HepG2 (cell line): ENCODE measurements at regions of chr3 and their contacts with region 1.

Region 1: DNA sequence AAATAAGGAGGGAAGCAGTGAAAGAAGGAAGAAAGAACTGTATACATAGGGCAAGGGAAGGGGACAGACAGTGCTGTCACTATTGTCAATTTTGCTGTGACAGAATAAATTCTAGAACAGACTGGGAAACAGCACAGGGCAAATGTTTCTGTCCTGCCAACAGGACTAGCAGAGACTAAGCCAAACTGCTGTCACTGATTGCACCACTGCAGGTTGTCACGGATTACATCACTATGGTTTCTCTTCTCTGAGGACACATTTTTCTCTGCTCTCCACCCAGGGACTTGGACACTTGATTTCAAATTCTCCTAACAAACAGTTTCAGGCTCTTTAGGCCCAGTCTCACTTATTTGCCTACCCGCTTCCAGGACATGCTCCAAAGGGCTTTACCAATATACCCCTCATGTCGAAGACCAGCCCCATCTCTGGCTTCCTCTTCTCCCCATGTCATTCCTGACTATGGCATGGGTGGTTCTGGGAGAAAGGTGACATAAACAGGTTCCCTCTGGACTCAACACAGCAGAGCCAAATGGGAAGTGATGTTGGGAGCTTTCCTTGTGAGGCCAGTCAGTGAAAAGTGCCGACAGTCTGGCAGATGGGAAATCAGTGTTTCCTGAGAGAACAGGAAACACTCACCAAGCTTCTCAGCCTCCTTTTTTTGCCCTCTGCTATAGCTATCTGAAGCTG is 70.2 kb upstream of the ST3GAL6 start:
- DNase-seq: peak; percentile 12
- ATAC-seq: peak; percentile 90
- H3K4me3 ChIP-seq: peak overlapping the region in 1 of 3 experiments; percentile 2; a peak in 1 of 6 replicates
- H3K27ac ChIP-seq: no peak overlapping the region
- H3K4me1 ChIP-seq: peaks cover 21% of the 10 kb centered on the region
- H3K27me3 ChIP-seq: no peaks in the 10 kb centered on the region; a peak in 1 of 5 replicates
- CTCF ChIP-seq: no peak
- EP300 ChIP-seq: no peak
- POLR2A ChIP-seq: no peak
- RAD21 ChIP-seq: no peak

Region 2: DNA sequence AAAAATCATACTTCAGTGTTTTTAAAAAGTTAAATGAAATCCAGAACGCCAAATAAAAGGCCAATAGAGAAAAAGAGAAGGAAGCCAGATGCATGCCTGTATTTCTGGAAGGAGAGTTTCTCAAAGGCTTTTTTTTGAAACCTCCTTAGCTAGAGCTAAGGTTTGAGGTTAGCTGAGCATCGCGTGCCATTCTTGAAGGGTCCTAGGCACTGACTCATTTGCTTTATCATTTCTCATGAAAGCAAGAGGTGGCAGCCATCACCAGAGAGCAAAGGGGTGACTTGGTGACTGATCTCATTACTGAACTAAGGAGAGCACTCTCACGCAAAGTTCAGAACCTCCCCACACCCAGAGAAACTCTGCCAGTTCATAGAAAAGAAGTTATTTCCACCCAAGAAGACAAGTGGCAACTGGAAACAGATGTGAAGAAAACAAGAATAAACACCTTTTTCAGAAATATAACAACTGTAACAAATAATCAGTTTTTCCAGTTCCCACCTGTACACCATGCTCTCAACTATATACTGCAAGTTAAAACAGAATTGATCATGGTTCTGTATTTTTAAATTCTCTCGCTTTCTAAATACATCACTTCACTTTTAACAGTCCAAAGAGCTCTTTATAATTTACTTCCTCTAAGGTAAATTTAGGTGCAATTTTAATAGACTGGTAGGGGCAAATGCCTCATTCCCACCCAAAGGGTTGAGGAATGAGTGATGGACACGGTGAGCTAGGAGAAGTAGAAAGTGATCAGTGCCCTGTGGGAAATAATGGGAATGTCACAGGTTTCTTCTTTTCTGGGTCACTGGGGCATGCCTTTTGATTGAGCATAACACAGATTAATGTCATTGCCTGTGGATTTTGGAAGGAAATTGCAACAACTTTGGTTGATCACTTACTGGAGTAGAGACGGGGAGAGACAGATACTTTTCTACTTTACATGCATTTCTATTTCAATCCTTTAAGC is 136.5 kb before region 1 on chr3:
- CTCF ChIA-PET with region 1: no interaction called
- POLR2A ChIA-PET with region 1: no interaction called
- in situ Hi-C with region 1: no loop called
- intact Hi-C with region 1: no loop called
- DNase-seq: no peak
- ATAC-seq: no peak
- H3K4me3 ChIP-seq: no peak overlapping the region
- H3K27ac ChIP-seq: no peak overlapping the region
- H3K4me1 ChIP-seq: no peaks in the 10 kb centered on the region
- H3K27me3 ChIP-seq: no peaks in the 10 kb centered on the region
- CTCF ChIP-seq: no peak
- EP300 ChIP-seq: no peak
- POLR2A ChIP-seq: no peak
- RAD21 ChIP-seq: no peak

Region 3: DNA sequence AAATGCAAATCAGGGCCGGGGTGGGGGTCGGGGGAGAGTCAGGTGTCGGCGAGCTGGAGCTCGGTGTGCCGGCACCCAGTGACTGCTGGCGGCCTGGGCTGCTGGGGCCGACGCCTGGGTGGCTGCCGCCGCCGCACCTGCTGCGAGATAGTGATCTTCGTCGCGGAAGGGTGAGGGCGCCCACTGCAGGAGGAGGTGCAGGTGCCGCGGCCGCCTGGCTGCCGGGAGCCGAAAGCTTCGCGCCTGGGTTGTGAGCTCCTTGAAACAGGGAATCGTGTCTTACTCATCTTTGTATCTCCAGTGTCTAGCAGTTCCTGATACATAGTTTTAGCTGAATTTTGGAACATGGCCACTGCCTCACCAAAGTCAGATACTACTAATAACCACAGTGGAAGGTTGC is 35.5 kb before region 1 on chr3:
- CTCF ChIA-PET with region 1: no interaction called
- POLR2A ChIA-PET with region 1: no interaction called
- in situ Hi-C with region 1: no loop called
- intact Hi-C with region 1: no loop called
- DNase-seq: no peak
- ATAC-seq: peak; percentile 93
- H3K4me3 ChIP-seq: no peak overlapping the region
- H3K27ac ChIP-seq: no peak overlapping the region
- H3K4me1 ChIP-seq: no peaks in the 10 kb centered on the region
- H3K27me3 ChIP-seq: peaks cover 0 to 8% of the 10 kb centered on the region in 2 experiments; a peak in 2 of 5 replicates
- CTCF ChIP-seq: peak; percentile 75
- EP300 ChIP-seq: no peak
- POLR2A ChIP-seq: no peak
- RAD21 ChIP-seq: 0 out of 2 replicates have a peak, but pooled peaks have one; percentile 19

Region 4: DNA sequence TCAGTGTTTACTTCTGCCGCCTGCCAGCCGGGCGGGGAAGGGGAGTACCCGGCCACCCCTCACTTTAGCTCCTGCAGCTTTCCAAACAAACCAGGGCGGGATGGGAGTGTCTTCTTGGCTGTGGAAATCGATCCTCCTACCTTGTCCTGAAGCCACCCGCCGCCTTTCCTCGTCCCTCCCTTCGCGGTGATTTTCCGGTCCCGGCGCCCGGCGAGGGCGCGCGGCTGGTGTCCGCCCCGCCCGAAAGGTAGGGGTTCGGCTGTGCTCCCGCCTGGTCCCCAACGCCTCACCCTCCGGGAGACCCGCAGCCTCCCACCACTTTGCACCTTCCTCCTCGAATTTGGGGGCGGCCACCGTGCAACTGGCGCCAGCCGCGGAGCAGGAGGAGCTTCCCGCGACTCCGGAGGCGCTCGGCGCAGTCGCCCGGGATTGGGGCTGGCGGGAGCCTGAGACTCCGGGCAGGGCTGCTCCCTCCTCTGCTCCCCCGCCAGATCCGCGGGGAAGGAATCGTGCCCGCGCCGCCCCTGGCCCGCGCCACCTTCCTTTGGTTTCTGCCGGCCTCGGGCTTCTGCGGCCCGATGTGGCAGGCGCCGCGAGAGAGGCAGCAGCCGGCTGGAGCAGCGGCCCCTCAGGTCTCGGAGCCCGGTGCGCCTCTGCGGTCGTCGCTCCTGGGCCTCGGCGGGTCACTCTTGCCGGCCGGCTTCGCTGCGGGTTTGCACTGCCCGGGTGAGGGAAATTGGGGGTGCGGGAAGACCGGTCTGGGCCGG is 39.5 kb after region 1 on chr3:
- CTCF ChIA-PET with region 1: no interaction called
- POLR2A ChIA-PET with region 1: interaction called, 3 read pairs
- in situ Hi-C with region 1: no loop called
- intact Hi-C with region 1: loop called (anchors 5 kb)
- DNase-seq: peak; percentile 82
- ATAC-seq: peak; percentile 85
- H3K4me3 ChIP-seq: peak overlapping the region; percentile 87 to 94 (median 92)
- H3K27ac ChIP-seq: peak overlapping the region; percentile 94
- H3K4me1 ChIP-seq: peaks cover 53% of the 10 kb centered on the region
- H3K27me3 ChIP-seq: no peaks in the 10 kb centered on the region; a peak in 1 of 5 replicates
- CTCF ChIP-seq: 0 out of 2 replicates have a peak, but pooled peaks have one; percentile 16
- EP300 ChIP-seq: peak in 1 of 2 experiments; percentile 31; a peak in 1 of 4 replicates
- POLR2A ChIP-seq: peak; percentile 62 to 70; a peak in 3 of 4 replicates
- RAD21 ChIP-seq: no peak

Region 5: DNA sequence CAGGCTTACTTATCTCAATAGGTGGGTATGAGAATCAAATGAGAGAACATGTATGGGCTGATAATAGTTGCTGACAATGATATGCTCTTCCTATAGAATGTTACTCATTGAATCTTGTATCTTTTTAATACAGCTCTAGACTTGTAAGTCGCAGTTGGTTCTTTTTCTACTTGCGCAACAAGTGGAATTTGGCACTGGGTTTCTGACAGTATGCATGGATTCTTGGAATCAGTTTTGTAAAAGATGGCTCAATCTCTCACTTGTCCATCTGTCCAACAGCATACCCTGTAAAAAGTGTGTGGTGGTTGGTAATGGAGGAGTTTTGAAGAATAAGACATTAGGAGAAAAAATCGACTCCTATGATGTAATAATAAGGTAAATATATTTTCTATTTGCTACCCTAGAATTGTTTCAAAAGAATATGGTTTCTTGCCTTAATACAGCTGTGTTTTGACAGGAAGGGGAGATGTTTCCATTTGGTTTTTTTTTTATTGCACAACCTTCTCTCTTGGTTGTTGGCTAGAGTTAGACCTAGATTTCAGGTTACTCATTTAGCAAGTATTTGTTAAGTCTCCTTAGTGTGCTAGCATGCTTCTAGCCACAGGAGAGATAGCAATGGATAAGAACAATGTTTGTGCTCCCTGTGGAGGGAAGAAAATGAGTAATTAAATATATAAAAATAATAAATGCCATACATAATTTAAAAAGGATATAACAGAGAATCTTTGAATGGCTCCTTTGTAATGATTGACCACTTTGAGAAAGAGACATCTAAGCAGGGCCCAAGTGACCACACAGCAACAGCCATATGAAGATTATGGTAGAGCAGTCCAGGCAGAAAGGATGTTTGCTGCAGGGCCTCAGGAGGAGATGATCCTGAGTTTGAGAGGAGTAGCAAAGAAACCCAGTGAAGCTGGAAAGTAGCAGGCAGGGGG is 92.0 kb after region 1 on chr3:
- CTCF ChIA-PET with region 1: no interaction called
- POLR2A ChIA-PET with region 1: no interaction called
- in situ Hi-C with region 1: no loop called
- intact Hi-C with region 1: loop called (anchors 5 kb)
- DNase-seq: peak; percentile 44
- ATAC-seq: no peak
- H3K4me3 ChIP-seq: no peak overlapping the region; a peak in 1 of 6 replicates
- H3K27ac ChIP-seq: peak overlapping the region; percentile 70
- H3K4me1 ChIP-seq: peaks cover 83% of the 10 kb centered on the region
- H3K27me3 ChIP-seq: no peaks in the 10 kb centered on the region
- CTCF ChIP-seq: no peak
- EP300 ChIP-seq: peak in 1 of 2 experiments; percentile 19; a peak in 1 of 4 replicates
- POLR2A ChIP-seq: no peak
- RAD21 ChIP-seq: no peak

Region 6: DNA sequence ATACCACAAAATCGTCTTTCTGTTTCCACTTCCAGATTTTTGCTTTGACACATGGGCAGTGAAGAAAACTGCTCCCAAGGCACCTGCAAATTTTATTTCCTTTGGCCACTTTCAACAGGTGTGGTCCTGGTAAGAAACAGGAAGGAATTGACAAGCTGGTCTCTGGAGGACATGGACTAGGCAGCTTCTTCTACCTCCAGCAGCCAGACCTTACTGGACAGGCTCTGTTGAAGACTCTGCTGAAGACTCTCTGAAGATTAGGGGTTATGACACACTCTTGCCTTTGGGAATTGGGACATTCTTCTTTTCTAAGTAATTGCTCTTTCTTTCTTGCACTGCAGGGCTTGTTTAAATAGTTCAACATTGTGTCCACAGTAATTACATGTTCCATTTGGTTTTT is 356.2 kb after region 1 on chr3:
- CTCF ChIA-PET with region 1: no interaction called
- POLR2A ChIA-PET with region 1: no interaction called
- in situ Hi-C with region 1: no loop called
- intact Hi-C with region 1: no loop called
- DNase-seq: no peak
- ATAC-seq: no peak
- H3K4me3 ChIP-seq: no peak overlapping the region
- H3K27ac ChIP-seq: no peak overlapping the region
- H3K4me1 ChIP-seq: no peaks in the 10 kb centered on the region
- H3K27me3 ChIP-seq: no peaks in the 10 kb centered on the region; a peak in 1 of 5 replicates
- CTCF ChIP-seq: no peak
- EP300 ChIP-seq: no peak
- POLR2A ChIP-seq: no peak
- RAD21 ChIP-seq: no peak

Region 7: DNA sequence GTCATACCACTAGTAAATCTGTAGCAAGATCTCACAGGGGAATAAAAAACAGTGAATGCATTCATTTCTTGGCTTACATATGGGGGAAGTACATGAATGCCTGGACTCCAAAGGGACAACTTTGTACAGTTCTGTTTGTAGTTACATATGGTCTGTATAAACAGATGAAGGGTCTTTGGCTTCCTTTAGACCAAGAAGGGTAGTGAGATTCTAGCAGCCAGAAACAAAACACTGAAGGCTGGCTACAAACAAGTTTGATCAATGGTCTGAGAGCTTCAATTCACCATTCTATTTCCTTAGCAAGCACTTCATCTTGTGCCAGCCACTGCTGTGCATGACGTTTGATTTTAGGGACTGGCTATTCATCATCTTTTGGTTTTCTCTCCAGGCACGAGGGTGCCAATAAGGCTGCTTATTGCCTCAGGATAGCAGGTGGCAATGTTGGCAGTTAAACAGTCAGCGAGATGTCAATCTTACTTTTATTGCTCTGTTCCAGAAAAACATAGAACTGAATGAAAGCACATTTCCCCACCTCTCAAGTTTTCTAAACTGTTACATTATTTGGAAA is 631.8 kb after region 1 on chr3:
- CTCF ChIA-PET with region 1: no interaction called
- POLR2A ChIA-PET with region 1: no interaction called
- in situ Hi-C with region 1: no loop called
- intact Hi-C with region 1: no loop called
- DNase-seq: no peak
- ATAC-seq: no peak
- H3K4me3 ChIP-seq: no peak overlapping the region
- H3K27ac ChIP-seq: no peak overlapping the region
- H3K4me1 ChIP-seq: no peaks in the 10 kb centered on the region
- H3K27me3 ChIP-seq: no peaks in the 10 kb centered on the region
- CTCF ChIP-seq: no peak
- EP300 ChIP-seq: no peak
- POLR2A ChIP-seq: no peak
- RAD21 ChIP-seq: no peak